ENCODE measurements at regions of chr3 and their contacts with region 1.

Region 1: DNA sequence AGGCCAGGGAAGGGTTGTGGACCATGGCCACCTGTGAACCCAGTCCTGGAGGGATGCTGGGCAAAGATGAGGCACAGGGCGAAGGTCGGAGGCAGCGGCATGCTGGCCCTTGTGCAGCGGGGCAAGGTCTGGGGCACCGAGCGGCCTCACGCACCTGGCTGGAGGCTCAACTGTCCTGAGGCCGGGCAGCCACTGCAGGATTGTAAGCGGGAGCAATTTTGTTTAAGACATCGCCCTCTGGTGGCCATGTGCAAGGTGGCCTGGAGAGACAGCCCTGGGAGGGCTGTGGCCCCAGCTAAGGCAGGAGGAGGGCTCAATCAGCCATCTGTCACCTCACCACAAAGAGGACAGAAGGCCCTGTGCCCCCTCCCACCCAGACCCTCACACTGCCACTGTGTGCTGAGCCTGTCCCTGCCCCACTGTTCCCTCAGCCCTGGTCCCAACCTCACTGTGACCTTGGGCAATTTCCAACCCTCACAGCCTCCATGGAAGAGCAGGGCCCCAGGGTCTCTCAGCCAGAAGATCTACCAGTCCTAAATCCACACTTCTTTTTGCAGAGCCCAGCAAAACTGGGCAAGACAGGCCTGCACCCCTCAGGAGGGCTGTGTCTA is 46.2 kb downstream of the TPRA1 start:
- DNase-seq: peak; percentile 80
- H3K4me3 Mint-ChIP-seq: no peak overlapping the region
- H3K27ac Mint-ChIP-seq: no peak overlapping the region
- H3K4me1 Mint-ChIP-seq: peaks cover 6% of the 10 kb centered on the region
- H3K27me3 Mint-ChIP-seq: peaks cover 17% of the 10 kb centered on the region
- CTCF ChIP-seq: peak; percentile 84

Region 2: DNA sequence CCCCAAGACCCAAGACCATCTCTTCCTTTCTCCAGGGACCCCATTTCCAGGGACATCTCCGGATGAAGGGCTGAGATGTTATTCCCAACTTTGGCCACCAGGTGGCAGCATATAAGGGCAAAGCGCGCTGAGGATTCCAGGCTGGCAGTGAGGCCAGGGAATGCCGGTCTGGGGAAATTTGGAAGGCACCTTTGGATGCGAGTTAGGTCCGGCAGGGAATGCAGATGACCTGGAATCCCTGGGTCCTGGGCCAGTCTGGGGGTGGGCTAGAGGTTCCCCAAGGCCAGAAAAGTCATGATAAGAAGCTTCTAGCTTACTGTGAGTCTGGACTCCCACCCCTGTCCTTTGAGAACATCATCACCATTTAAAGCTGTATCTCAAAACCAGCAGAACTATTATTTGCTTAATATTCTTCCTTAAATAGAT is 1021.9 kb before region 1 on chr3:
- CTCF ChIA-PET with region 1: interaction called, 38 read pairs
- POLR2A ChIA-PET with region 1: interaction called, 3 read pairs
- intact Hi-C with region 1: loop called (anchors 2 kb)
- DNase-seq: peak; percentile 65
- H3K4me3 Mint-ChIP-seq: no peak overlapping the region
- H3K27ac Mint-ChIP-seq: no peak overlapping the region
- H3K4me1 Mint-ChIP-seq: no peaks in the 10 kb centered on the region
- H3K27me3 Mint-ChIP-seq: no peaks in the 10 kb centered on the region
- CTCF ChIP-seq: peak; percentile 90

Region 3: DNA sequence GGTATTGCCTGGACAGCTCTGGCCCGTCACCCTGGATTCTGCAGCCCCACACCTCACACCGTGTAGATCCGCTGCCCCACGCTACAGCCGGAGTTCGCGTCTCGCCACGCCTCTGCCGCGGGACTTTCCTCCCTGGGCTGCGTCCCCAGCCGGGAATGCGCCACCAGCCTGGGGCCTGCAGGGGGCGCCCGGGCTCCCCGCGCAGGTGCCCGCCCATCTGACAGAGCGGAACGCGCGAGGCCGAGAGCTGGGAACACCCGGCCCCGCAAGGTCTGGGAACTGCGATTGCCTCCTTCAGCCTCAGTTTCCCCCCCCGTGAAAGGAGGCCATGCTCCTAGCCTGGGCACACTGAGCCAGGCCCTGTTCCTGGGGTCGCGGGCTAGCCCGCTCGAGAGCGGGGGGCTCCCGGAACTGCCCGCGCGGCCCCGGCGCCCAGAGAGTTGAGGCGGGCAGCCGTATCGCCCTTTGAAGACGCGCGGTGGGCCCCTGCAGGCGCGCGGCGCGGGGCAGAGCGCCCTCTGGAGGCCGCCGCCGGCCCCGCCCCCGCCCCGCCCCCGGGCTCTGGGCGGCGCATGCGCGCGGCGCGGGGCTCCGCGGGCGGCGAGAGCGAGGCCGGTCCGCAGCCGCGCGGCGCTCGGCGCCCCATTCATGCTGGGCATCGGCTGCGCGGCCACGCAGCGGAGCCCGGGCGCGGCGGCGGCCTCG is 561.7 kb before region 1 on chr3 and contains the start of gene PLXNA1:
- CTCF ChIA-PET with region 1: interaction called, 4 read pairs
- POLR2A ChIA-PET with region 1: no interaction called
- intact Hi-C with region 1: loop called (anchors 5 kb)
- DNase-seq: peak; percentile 83
- H3K4me3 Mint-ChIP-seq: peak within 1 kb of the TSS; percentile 69
- H3K27ac Mint-ChIP-seq: no peak within 1 kb of the TSS
- H3K4me1 Mint-ChIP-seq: peaks cover 22% of the 10 kb centered on the region
- H3K27me3 Mint-ChIP-seq: no peaks in the 10 kb centered on the region
- CTCF ChIP-seq: peak; percentile 93
- total RNA-seq, gene PLXNA1: 42.1 and 48.4 TPM in 2 replicates

Region 4: GRCh38 chr3:127411083-127411727 is 133.1 kb before region 1 on chr3:
- CTCF ChIA-PET with region 1: no interaction called
- POLR2A ChIA-PET with region 1: no interaction called
- intact Hi-C with region 1: no loop called
- DNase-seq: no peak
- H3K4me3 Mint-ChIP-seq: no peak overlapping the region
- H3K27ac Mint-ChIP-seq: no peak overlapping the region
- H3K4me1 Mint-ChIP-seq: peaks cover 4% of the 10 kb centered on the region
- H3K27me3 Mint-ChIP-seq: peaks cover 16% of the 10 kb centered on the region
- CTCF ChIP-seq: no peak

Region 5: DNA sequence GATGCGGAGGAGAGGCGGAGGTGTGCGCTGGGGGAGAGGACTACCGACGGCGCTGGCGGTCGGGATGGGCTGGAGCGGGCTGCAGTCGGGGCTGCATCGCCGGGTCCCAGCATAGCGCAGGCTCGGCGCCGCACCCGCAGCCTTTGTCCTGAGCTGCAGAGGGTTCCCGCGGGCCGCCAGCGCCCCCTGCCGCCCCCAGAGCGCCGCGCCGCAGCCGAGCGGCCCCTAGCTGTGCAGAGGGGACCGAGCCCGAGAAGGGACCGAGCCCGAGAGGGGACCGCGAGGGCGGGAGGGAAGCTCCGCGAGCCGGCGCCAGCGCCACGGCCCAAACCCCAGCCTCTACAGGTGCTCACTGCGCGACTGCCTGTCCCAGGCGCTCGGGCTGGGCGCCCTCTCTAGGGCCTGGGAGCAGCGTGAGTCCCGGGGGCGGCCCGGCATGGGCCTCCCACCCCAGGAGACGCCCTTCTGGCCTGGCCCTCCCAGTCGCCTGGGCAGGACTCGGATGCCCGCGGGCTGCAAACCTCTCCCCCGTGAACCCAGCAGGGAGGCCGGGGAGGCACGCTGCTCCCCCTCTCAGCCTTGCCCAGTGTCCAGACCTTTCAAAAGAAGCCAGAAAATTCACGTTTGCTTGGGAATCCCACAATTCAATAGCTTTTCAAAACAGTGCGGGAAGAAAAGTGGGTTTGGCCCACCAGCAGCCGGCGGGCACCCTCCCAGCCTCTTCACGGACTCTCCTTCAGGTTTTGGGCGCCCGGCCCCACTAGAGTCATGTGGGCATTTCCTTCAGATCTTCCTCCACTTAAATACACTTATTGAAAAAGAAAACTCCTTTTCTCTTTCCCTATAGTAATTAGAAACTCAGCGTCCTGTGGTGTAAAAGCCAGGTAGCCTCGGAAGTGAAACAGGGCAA is 88.5 kb before region 1 on chr3:
- CTCF ChIA-PET with region 1: interaction called, 12 read pairs
- POLR2A ChIA-PET with region 1: no interaction called
- intact Hi-C with region 1: loop called (anchors 1 kb)
- DNase-seq: peak; percentile 76
- H3K4me3 Mint-ChIP-seq: peak overlapping the region; percentile 62
- H3K27ac Mint-ChIP-seq: no peak overlapping the region
- H3K4me1 Mint-ChIP-seq: peaks cover 28% of the 10 kb centered on the region
- H3K27me3 Mint-ChIP-seq: no peaks in the 10 kb centered on the region
- CTCF ChIP-seq: peak; percentile 98

Region 6: DNA sequence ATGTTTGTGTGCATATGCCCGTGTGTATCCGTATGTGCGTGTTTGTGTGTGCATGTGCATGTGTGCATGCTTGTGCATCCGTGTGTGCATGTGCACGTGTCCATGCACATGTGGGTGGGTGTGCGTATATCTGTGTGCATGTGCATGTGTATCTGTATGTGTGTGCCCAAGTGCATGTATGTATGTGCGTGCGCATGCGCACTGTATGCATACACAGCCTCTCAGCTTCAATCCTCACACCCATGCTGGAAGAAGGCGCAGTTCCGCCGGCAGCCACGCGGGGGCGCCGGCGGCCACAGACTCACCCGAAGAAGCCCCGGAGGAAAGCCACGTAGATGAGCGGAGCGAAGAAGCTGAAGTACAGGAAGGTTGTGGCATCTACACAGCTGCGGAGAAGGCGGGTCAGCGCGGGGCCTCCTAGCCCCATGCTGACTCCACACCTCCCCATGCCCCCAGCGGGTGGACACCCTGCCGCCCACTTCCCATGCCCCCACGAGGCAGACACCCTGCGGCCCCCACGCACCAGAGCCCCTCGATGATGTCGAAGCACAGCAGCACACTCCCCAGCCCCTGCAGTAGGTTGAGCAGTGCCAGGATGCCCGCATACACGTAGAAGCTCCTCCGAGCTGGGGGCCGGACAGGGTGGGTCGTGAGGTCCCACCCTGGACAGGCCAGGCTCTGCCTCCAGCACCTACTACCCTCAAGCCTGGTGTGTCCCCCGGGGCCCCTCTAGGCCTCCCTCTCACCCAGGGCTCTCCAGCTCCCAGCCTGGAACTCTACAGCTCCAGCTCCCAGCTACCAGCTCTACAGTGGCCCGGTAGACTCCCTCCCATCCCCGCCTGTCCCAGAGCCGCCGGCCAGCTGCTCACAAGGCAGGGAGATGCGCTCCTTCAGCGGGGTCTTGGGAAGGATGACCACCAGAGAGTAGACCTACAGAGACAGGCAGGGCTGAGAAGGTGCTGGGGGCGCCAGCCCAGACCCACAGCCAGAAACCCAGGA is 30.9 kb after region 1 on chr3:
- CTCF ChIA-PET with region 1: interaction called, 10 read pairs
- POLR2A ChIA-PET with region 1: no interaction called
- intact Hi-C with region 1: no loop called
- DNase-seq: peak; percentile 91
- H3K4me3 Mint-ChIP-seq: no peak overlapping the region
- H3K27ac Mint-ChIP-seq: peak overlapping the region; percentile 23
- H3K4me1 Mint-ChIP-seq: peaks cover 6% of the 10 kb centered on the region
- H3K27me3 Mint-ChIP-seq: no peaks in the 10 kb centered on the region
- CTCF ChIP-seq: peak; percentile 96

Region 7: GRCh38 chr3:127738192-127738840 is 194.0 kb after region 1 on chr3:
- CTCF ChIA-PET with region 1: no interaction called
- POLR2A ChIA-PET with region 1: no interaction called
- intact Hi-C with region 1: no loop called
- DNase-seq: peak; percentile 39
- H3K4me3 Mint-ChIP-seq: no peak overlapping the region
- H3K27ac Mint-ChIP-seq: peak overlapping the region; percentile 42
- H3K4me1 Mint-ChIP-seq: peaks cover 19% of the 10 kb centered on the region
- H3K27me3 Mint-ChIP-seq: no peaks in the 10 kb centered on the region
- CTCF ChIP-seq: no peak

Measured in MCF 10A (cell line).